ENCODE measurements at regions of chr2 and their contacts with region 1.

Region 1: DNA sequence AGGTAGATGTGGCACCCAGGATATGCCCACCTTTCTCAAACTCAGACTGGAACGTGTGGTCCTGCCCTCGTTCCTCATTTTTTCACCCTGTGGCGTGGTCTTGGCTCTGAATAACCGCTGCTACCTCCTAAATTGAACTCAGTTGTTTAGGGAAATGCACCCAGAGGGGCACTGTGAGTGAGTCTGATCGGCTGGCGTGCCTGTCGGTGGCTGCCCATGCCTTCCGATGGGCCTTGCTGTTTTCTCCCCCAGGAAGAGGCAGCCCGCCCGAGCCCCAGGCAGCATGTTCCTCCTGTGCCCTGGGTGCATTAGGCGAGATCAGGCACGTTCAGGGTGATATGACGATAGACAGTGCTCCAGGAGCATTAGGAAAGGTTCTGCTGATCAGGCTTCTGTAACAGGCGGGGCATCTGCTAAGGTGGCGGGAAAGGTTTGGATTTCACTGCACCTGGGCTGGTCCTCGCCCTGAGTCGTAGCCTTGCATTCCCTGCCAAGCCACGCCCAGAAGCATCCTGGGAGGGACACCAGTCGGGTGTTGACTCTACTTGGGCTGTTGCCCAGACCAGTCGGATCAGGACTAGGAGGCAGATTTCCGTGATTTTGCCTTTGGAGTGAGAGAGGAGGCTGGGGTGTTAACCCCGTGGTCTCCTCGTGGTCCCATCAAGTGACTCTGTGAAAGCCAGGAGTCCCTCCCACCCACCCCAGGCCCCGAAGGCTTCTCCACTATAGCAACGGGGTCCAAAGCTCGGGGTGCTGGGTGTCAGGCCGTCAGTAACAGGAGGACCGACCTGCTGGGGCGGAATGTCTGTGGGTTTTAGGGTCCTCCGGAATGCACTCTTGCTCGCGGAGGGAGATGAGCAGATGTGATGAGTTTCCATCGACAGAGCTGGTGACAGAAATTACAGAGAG is 75.1 kb downstream of the SH3BP4 start:
- DNase-seq: peak; percentile 99
- H3K4me3 ChIP-seq: peak overlapping the region in 2 of 3 experiments; percentile 35 to 40
- H3K27ac ChIP-seq: peak overlapping the region; percentile 99
- H3K4me1 ChIP-seq: peaks cover 60% of the 10 kb centered on the region
- H3K27me3 ChIP-seq: no peaks in the 10 kb centered on the region
- CTCF ChIP-seq: no peak

Region 2: DNA sequence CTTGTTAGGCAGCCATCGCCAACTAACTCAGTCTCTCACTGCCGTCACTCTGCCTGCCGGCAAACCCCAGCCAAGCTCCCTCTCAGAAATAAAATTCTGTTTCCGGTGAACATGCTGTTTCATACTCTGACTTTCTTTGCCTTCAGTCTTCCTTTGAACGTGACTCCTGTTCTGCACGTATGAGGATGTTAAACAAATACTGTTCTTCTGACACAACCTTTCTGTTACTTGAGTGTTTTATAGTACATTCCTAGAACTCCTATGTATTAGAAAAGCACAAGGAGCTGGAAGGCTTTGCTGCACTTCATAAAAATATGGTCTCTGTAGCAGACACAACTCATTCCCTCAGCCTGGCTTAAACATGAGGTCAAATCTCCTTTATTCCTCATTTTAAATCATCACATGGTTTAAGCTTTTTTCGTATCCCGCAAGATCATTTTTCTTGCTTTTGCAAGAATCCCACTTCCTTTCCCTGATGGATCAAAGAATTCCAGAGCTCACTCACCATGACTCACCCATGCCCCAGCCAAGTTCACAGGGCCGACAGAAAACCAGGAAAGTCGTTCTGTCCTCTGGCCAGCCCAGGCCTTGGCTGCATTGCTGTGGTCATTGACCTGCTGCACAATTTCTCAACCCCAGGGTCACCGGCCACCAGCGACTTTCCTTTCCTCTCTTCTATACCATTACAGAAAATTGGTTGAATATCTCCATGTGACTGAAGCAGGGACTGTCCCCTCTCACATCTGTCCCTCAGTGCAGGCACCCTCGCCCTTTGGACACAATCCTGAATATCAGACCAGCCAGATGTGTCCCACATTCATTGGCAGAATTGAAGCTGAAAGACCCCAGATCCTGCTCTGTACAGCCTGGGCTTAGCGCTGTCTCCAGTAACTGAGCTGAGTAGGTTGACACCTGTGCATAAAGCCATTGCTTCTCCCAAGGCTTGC is 346.9 kb before region 1 on chr2:
- CTCF ChIA-PET with region 1: no interaction called
- dilution Hi-C with region 1: no loop called
- in situ Hi-C with region 1: no loop called
- intact Hi-C with region 1: loop called (anchors 10 kb)
- DNase-seq: peak; percentile 63
- H3K4me3 ChIP-seq: no peak overlapping the region
- H3K27ac ChIP-seq: peak overlapping the region; percentile 52
- H3K4me1 ChIP-seq: peaks cover 60% of the 10 kb centered on the region
- H3K27me3 ChIP-seq: no peaks in the 10 kb centered on the region
- CTCF ChIP-seq: no peak

Region 3: DNA sequence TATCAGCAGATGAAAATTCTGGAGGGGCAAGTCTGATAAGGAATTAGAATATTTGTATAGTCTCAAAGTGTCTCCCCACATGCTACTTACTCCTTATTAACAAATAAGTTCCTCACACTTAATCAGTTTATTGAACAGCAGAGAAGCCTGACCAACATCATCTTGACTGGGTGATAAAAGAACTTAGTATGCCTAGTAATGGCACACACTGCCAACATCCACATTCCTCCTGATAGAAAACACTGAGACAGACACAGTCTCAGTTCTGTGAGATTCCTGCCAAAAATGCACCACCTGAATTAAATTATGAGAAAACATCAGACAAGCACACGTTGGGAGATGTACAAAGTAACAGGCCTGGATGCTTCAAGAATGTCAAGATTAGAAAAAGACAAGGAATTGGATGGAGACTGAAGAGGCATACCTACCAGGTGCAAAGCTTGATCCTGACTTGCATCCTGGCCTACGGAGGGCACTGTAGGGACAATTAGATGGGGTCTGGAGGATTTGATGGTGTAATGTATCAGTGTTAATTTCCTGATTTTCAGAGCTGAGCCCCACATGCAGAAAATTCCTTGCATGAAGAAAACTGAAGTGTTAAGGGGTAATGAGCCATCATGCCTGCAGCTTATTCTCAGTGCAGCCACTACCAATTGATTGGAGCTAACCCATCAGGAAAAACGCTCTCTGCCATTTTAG is 275.5 kb before region 1 on chr2:
- CTCF ChIA-PET with region 1: no interaction called
- dilution Hi-C with region 1: no loop called
- in situ Hi-C with region 1: no loop called
- intact Hi-C with region 1: loop called (anchors 2 kb)
- DNase-seq: no peak
- H3K4me3 ChIP-seq: no peak overlapping the region
- H3K27ac ChIP-seq: no peak overlapping the region
- H3K4me1 ChIP-seq: no peaks in the 10 kb centered on the region
- H3K27me3 ChIP-seq: no peaks in the 10 kb centered on the region
- CTCF ChIP-seq: peak in 1 of 2 donors; percentile 32

Region 4: DNA sequence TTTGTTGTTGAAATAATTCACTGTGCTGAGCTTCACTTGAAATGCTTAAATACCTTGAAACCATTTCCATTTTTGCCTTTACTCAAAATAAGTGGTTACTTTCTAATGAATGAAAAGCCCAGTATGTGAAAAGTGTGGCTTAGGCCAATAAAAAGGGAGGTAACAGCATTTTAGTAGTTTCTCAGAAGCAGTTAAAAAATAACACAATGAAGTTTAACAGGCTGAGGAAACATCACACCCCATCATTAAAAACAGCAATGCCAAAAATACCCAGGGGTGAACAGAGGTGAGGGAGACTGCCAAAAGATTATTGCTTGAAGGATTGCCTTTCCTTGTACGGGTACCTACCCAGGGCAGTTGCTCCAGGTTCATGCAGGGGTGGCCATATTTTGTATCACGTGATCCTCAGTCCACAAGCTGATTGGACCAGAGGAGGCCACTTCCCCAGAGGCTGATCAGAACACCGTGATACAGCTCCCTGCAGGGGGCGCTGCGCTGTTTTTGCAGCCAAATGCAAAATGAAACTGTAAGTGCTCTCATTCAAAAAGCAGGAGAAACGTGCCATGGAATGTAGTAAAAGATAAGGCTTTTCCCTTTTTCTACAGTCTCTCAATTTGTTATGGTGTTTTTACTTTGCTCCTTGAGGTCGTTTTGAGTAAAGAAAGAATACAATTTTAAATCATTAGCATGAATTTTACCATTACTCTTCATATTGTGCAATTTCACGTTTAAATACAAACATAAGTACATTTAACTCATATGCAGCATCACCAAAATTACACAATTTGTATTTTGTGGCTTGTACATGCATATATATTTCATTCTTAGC is 145.3 kb before region 1 on chr2:
- CTCF ChIA-PET with region 1: no interaction called
- dilution Hi-C with region 1: no loop called
- in situ Hi-C with region 1: no loop called
- intact Hi-C with region 1: loop called (anchors 2 kb)
- DNase-seq: peak; percentile 70
- H3K4me3 ChIP-seq: no peak overlapping the region
- H3K27ac ChIP-seq: no peak overlapping the region
- H3K4me1 ChIP-seq: peaks cover 22% of the 10 kb centered on the region
- H3K27me3 ChIP-seq: no peaks in the 10 kb centered on the region
- CTCF ChIP-seq: peak; percentile 67 to 79

Region 5: DNA sequence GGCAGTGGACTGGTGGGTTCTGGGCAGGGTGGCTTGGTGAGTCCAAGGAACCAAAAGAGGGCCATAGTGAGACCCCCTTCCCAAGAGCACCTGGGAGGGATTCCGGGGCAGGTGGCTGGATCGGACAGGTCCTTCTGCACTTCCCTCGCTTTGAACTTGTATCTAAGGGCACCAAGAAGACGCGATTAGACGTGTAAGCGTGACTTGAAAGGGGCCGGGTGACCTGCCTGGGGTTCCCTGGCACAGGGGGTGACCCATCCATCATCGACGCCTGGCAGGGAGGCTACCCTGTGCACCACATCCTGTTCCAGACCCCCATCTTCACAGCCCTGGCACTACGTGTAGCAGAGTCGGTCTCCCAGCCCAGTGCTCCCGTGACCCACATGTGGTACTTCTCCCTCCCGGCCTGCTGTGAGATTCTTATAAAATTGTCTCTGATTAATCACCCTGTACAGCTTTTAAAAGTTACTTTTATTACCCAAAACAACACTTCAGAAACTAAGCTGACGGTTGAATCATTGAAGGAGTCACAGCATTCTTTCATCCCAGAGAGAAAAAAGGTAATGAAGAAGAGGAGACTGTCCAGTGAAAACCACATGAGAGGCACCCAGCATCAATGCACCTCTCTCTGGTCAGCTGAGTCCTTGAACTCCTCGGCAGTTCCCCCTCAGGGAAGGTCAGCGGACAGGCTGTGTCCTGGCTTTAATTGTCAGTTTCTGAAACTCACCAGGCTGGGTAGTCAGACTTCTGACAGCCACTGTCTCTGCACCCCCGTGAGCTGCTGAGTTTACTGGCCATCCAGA is 62.1 kb before region 1 on chr2:
- CTCF ChIA-PET with region 1: no interaction called
- dilution Hi-C with region 1: loop called (anchors 5 kb)
- in situ Hi-C with region 1: no loop called
- intact Hi-C with region 1: no loop called
- DNase-seq: no peak
- H3K4me3 ChIP-seq: no peak overlapping the region
- H3K27ac ChIP-seq: peak overlapping the region; percentile 36
- H3K4me1 ChIP-seq: peaks cover 29% of the 10 kb centered on the region
- H3K27me3 ChIP-seq: no peaks in the 10 kb centered on the region
- CTCF ChIP-seq: no peak

Region 6: DNA sequence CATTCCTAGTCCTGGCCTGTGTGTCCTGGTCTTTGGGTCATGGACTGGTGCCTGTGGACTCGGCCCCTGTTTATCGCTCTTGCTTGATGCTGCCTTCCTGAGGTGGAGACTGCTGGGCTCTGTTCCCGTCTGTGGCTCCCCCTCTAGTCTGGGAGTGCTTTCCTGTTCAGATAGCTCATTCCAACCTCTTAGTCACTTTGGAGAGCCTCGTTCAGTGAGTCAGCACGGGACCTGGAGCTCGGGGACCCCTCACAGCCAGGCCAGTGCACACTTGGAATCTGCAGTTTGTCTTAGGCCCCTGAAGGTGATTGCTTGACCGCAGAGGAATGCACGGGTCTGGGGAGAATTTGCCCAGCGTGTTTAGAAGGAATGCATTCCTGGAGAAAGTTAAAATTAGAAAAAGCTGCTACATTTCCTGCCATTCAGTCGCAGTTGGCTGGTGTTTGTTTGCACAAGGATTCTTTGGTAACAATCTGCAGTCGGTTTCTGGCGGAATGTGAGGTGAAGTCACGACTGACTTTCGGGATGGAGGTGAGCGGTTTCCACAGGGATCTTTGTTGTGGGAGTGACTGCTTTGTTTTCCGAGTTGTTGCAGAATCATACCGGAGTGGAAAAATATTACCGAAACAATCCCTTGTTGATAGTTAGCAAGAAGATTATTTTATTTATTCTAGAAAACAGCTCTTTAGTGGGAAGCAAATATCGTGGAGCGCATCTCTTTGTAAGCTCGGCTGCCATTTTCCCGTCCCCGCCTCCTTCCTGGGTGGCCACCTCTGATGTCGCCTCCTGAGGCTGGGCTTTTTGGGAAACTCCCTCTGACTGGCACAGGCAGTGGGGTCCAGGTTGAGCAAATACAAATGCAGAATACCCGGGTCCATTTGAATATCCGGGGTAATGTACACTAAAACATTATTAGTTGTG is 45.4 kb before region 1 on chr2:
- CTCF ChIA-PET with region 1: no interaction called
- dilution Hi-C with region 1: no loop called
- in situ Hi-C with region 1: no loop called
- intact Hi-C with region 1: loop called (anchors 1 kb)
- DNase-seq: peak; percentile 95
- H3K4me3 ChIP-seq: peak overlapping the region in 2 of 3 experiments; percentile 4 to 15
- H3K27ac ChIP-seq: peak overlapping the region; percentile 95
- H3K4me1 ChIP-seq: peaks cover 51% of the 10 kb centered on the region
- H3K27me3 ChIP-seq: no peaks in the 10 kb centered on the region
- CTCF ChIP-seq: peak in 1 of 2 donors; percentile 17

Region 7: GRCh38 chr2:235008584-235009044 is 18.3 kb before region 1 on chr2:
- CTCF ChIA-PET with region 1: no interaction called
- dilution Hi-C with region 1: no loop called
- in situ Hi-C with region 1: no loop called
- intact Hi-C with region 1: loop called (anchors 1 kb)
- DNase-seq: peak; percentile 92
- H3K4me3 ChIP-seq: no peak overlapping the region
- H3K27ac ChIP-seq: peak overlapping the region; percentile 17
- H3K4me1 ChIP-seq: peaks cover 32% of the 10 kb centered on the region
- H3K27me3 ChIP-seq: no peaks in the 10 kb centered on the region
- CTCF ChIP-seq: no peak